AG04449 (cell line): ENCODE measurements at regions of chr7 and their contacts with region 1.

Region 1: DNA sequence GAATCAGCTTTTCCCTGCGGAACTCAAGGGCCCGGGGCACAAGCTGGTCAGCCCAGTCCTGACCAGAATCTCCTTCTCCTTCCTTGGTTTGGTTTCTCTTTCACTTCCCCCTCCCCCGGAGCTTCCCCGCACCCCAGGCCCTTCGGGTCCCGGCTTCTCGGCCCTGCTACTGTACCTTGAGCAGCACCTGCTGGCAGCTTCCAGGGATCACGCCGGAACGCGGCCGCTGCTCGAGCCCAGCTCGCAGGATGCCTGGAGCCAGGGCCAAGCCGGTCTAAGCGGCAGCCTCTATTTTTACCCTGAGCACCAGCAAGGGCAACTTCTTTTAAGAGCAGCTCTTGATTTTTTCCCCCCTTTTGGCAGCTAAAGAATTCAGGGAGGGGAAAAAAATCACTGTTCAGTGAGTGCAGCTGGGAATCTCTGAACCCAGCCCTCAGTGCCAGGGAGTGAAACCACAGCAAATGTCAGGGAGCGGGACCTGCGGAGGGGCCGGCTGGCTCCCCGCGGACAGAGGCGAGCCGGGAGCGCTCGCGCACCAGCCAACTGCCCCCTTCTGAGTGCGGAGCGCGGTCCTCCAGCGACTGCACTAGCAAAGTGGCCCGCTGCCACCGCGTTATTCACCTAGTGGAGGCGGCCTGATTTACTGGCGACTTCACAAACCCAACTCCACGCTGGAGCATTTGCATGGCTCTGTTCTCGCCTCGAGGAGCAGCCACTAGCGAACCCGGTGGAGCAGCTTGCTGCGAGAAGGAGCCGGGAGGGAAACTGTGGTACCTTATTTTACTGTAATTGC is 2.4 kb upstream of the INHBA start:
- DNase-seq: peak; percentile 68
- H3K4me3 ChIP-seq: peak overlapping the region; percentile 69
- CTCF ChIP-seq: peak; percentile 94

Region 2: GRCh38 chr7:40763318-40764287 is 941.7 kb before region 1 on chr7:
- CTCF ChIA-PET with region 1: interaction called, 15 read pairs
- POLR2A ChIA-PET with region 1: interaction called, 5 read pairs
- DNase-seq: peak; percentile 83
- H3K4me3 ChIP-seq: peak overlapping the region; percentile 29; the same call in 1 of the 2 replicates
- CTCF ChIP-seq: peak; percentile 59

Region 3: DNA sequence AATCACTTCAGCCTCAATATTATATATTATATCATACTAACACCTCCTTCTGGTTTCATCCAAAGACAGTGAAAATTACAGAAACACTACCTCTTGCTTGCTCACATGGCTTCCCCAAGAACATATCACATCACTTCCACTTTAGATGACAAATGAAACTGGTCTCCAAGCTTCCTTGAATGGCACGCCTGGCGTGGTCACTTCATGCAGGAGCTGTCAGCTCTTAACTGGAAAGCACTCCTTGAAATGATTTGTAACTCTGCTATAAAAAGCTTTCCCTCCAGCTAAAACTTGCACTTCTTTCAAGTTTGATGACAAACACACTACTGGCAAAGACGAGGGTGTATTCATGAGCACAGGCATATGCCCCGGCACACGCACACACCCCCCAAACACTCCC is 81.6 kb after region 1 on chr7:
- CTCF ChIA-PET with region 1: no interaction called
- POLR2A ChIA-PET with region 1: no interaction called
- DNase-seq: no peak
- H3K4me3 ChIP-seq: no peak overlapping the region
- CTCF ChIP-seq: no peak

Region 4: GRCh38 chr7:41886262-41886900 is 181.1 kb after region 1 on chr7:
- CTCF ChIA-PET with region 1: interaction called, 16 read pairs
- POLR2A ChIA-PET with region 1: interaction called, 13 read pairs
- DNase-seq: peak; percentile 97
- H3K4me3 ChIP-seq: no peak overlapping the region
- CTCF ChIP-seq: no peak